Colonic mucosa (tissue), 4 donors: ENCODE measurements at regions of chr17 and their contacts with region 1.

Region 1: DNA sequence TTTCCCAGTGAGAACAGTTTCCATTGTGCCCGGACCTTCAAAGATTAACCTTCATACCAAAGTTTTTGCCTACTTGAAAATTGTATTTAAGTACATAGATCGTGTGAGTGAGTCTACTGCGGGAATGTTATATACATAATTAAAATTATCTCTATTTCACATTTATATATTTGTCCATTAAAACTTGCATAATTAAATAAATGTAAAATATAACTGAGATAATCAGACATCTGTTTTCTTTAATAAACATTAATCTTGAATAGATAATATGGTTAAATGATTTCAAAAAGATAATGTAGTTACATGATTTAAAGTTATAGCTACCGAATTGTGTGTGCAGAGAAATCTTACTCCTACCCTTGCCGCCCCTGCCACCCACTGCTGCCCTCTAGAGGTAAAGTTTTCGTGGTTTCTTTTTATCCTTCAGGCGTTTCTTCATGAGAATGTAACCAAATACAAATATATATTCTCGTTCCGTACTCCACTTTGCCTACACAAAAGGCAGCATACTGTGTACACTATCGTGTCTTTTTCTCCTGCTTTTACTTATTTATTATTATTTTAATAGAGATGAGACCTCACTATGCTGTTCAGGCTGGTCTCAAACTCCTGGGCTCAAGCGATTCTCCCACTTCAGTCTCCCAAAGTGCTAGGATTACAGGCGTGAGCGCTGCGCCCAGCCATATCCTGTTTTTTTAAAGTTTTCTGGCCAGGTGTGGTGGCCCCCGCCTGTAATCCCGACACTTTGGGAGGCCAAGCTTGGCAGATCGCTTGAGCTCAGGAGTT is 35.6 kb downstream of the RPA1 start:
- DNase-seq: peak; percentile 63
- H3K4me3 ChIP-seq: no peak overlapping the region
- H3K27ac ChIP-seq: no peak overlapping the region
- H3K4me1 ChIP-seq: no peaks in the 10 kb centered on the region
- H3K27me3 ChIP-seq: no peaks in the 10 kb centered on the region
- CTCF ChIP-seq: peak; percentile 64

Region 2: DNA sequence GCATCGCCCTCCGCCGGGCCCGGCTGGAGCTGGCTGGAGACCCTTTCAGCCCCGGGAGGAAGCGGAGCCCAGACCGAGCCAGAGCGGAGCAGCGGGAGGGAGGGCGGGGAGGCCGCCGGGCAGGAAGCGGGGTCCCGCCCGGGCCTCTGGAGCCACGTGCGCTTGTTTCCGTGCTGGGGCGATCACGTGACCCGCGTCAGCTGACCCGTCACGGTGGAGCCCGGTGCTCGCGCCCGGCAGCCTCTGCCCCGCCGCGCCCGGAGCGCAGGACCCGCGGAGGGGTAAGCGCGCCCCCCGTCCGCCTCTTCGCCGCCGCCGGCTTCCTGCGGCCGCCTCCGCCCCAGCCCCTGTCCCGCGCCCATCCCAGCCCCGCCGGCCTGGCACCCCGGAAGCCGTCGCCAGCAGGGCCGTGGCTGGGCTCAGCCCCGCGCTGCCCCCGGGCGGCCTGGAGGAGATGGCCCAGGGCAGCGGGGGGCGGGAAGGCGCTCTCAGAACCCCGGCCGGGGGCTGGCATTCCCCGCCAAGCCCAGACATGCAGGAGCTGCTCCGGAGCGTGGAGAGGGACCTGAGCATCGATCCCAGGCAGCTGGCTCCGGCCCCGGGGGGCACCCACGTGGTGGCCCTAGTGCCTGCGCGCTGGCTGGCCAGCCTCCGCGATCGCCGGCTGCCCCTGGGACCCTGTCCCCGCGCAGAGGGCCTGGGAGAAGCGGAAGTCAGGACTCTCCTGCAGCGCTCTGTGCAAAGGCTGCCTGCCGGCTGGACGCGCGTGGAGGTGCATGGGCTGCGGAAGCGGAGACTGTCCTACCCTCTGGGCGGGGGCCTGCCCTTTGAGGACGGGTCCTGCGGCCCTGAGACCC is 140.7 kb before region 1 on chr17 and contains the start of gene WDR81:
- intact Hi-C with region 1: loop called (anchors 5 kb)
- DNase-seq: peak; percentile 93
- H3K4me3 ChIP-seq: peak within 1 kb of the TSS; percentile 77
- H3K27ac ChIP-seq: peak within 1 kb of the TSS; percentile 67
- H3K4me1 ChIP-seq: peaks cover 6% of the 10 kb centered on the region
- H3K27me3 ChIP-seq: no peaks in the 10 kb centered on the region
- CTCF ChIP-seq: no peak
- total RNA-seq, gene WDR81: 9.2 to 16.0 TPM

Region 3: GRCh38 chr17:2500446-2500845 is 635.0 kb after region 1 on chr17:
- intact Hi-C with region 1: no loop called
- DNase-seq: no peak
- H3K4me3 ChIP-seq: no peak overlapping the region
- H3K27ac ChIP-seq: no peak overlapping the region
- H3K4me1 ChIP-seq: no peaks in the 10 kb centered on the region
- H3K27me3 ChIP-seq: no peaks in the 10 kb centered on the region
- CTCF ChIP-seq: no peak